ENCODE measurements at regions of chr19 and their contacts with region 1.

Region 1: GRCh38 chr19:3984908-3985642 is at the start of gene EEF2:
- DNase-seq: peak; percentile 92 to 93 (median 92)
- H3K4me3 ChIP-seq: peak within 1 kb of the TSS; percentile 76 to 97 (median 93)
- H3K4me3 Mint-ChIP-seq: peak within 1 kb of the TSS; percentile 96 to 97
- H3K27ac ChIP-seq: peak within 1 kb of the TSS; percentile 83 to 93
- H3K27ac Mint-ChIP-seq: peak within 1 kb of the TSS; percentile 93 to 99 (median 96)
- H3K4me1 ChIP-seq: peaks cover 35 to 44% of the 10 kb centered on the region in 2 donors
- H3K4me1 Mint-ChIP-seq: peaks cover 40% of the 10 kb centered on the region
- H3K27me3 ChIP-seq: no peaks in the 10 kb centered on the region
- H3K27me3 Mint-ChIP-seq: peaks cover 0 to 3% (median 0%) of the 10 kb centered on the region in 3 donors
- CTCF ChIP-seq: no peak
- polyA plus RNA-seq, gene EEF2: 264 to 836 (median 323) TPM

Region 2: GRCh38 chr19:3970808-3971598 is 14.1 kb before region 1 on chr19 and contains the start of gene DAPK3:
- intact Hi-C with region 1: loop called in 1 of 2 experiments (anchors 2 kb)
- DNase-seq: peak; percentile 95 to 96 (median 96)
- H3K4me3 ChIP-seq: peak within 1 kb of the TSS; percentile 85 to 95 (median 94)
- H3K4me3 Mint-ChIP-seq: peak within 1 kb of the TSS; percentile 88 to 93
- H3K27ac ChIP-seq: peak within 1 kb of the TSS; percentile 44 to 76
- H3K27ac Mint-ChIP-seq: peak within 1 kb of the TSS; percentile 72 to 93 (median 81)
- H3K4me1 ChIP-seq: peaks cover 11 to 20% of the 10 kb centered on the region in 2 donors
- H3K4me1 Mint-ChIP-seq: peaks cover 15% of the 10 kb centered on the region
- H3K27me3 ChIP-seq: no peaks in the 10 kb centered on the region
- H3K27me3 Mint-ChIP-seq: peaks cover 0 to 2% (median 2%) of the 10 kb centered on the region in 3 donors
- CTCF ChIP-seq: no peak
- polyA plus RNA-seq, gene DAPK3: 13.7 to 32.1 (median 21.8) TPM

Region 3: DNA sequence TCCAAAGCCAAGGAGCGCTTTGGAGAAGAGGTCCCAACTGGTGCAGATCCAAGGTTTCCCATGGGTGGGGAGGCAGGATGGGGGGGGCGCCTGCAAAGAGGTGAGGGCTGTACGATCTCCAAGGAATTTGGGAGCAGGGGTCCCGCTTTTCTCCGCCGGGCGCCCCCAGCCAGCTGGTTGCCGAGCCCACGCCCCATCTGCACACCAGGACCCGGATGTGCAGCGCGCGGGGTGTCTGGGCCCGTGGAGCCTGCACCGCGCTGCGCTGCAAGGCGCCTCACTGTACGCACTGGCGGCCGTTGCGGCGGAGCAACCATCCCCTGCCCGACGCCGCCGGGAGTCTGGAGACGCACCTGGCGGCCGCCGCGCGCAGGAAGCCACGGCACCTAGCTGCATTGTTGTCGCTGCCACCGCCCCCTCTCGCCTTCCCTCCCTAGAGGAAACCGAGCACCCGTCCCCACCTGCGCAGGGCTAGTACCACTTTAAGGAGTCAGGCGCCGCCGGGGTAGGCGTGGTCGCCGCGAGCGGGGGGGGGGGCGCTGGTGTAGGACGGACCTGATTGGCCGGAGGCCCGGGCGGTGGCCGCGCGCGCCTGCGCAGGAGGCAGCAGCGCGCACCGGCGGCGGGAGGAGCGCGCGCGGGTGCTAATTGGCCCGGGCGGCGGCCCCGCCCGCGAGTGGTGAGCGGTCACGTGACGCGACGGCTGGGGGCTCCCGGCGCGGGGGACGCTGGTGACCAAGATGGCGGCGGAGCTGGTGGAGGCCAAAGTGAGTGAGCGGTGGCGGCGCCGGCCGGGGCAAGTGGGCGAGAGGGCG is 22.2 kb after region 1 on chr19 and contains the start of gene PIAS4:
- intact Hi-C with region 1: loop called in 1 of 2 experiments (anchors 2 kb)
- DNase-seq: peak; percentile 92 to 96 (median 95)
- H3K4me3 ChIP-seq: peak within 1 kb of the TSS; percentile 74 to 84 (median 79)
- H3K4me3 Mint-ChIP-seq: peak within 1 kb of the TSS; percentile 84 to 91
- H3K27ac ChIP-seq: peak within 1 kb of the TSS in 1 of 2 donors; percentile 71
- H3K27ac Mint-ChIP-seq: peak within 1 kb of the TSS; percentile 37 to 85 (median 69)
- H3K4me1 ChIP-seq: peaks cover 19 to 32% of the 10 kb centered on the region in 2 donors
- H3K4me1 Mint-ChIP-seq: peaks cover 30% of the 10 kb centered on the region
- H3K27me3 ChIP-seq: no peaks in the 10 kb centered on the region
- H3K27me3 Mint-ChIP-seq: peaks cover 0 to 1% (median 0%) of the 10 kb centered on the region in 3 donors
- CTCF ChIP-seq: no peak
- polyA plus RNA-seq, gene PIAS4: 2.3 to 8.1 (median 5.9) TPM

Region 4: DNA sequence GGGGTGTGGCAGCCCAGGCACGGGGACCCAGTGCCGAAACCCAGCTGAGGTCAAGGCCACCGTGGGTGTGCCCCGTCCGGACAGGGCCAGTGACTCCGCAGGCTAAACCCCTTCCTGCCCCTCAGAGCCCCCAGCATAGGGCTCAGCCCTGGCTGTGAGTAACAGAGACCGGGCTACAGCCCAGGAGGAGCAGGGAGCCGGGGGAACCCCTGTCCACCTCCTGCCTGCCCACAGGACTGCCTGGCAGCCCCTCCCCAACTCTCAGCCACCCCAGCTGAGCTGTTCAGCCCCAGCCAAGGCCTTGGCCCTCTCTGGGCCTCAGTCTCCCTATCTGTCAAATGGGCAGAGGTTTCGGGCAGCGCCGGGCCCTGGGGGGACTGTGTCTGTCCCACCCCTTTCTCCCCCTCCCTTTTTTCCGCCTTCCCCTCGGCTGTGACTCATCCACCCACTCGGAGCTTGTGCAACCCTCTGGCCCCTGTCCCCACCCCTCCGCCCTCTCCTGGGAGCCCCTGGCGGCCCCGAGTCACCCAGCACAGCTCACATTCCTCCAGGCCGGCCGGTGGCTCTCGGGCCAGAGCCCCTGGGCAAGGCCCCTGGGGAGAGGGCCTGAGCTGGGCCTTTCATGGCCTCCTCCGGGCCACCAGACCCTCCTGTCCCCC is 73.1 kb after region 1 on chr19:
- intact Hi-C with region 1: no loop called
- DNase-seq: peak; percentile 94 to 98 (median 95)
- H3K4me3 ChIP-seq: peak overlapping the region; percentile 13 to 93 (median 40)
- H3K4me3 Mint-ChIP-seq: peak overlapping the region; percentile 77
- H3K27ac ChIP-seq: peak overlapping the region; percentile 97
- H3K27ac Mint-ChIP-seq: peak overlapping the region; percentile 96 to 100 (median 99)
- H3K4me1 ChIP-seq: peaks cover 77 to 92% of the 10 kb centered on the region in 2 donors
- H3K4me1 Mint-ChIP-seq: peaks cover 65% of the 10 kb centered on the region
- H3K27me3 ChIP-seq: no peaks in the 10 kb centered on the region
- H3K27me3 Mint-ChIP-seq: peaks cover 0 to 4% (median 1%) of the 10 kb centered on the region in 3 donors
- CTCF ChIP-seq: peak; percentile 46

Region 5: DNA sequence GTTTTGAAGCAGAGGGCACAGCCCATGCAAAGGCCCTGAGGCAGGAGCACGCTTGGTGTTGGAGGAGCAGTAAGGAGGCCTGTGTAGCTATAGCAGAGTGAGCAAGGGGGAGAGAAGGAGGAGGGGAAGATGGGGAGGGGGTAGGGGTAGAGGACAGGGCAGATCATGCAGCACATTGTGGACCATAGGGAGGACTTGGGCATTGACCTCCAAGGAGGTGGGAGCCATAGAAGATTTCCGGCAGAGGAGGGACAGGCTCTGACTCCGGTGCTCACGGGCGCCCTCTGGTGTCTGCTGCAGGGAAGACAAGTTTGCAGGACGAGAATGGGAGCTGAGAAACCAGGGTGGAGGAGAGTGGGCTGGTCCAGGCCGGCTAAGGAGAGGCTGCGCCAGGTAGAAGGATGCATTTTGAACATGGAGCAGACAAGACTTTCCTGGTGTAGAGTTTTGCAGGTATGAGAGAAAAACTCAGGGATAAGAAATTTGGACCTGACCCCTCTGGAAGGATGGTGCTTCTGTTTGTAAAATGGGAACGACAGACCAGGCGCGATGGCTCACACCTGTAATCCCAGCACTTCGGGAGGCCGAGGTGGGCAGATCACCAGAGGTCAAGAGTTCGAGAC is 154.7 kb after region 1 on chr19:
- intact Hi-C with region 1: loop called in 1 of 2 experiments (anchors 2 kb)
- DNase-seq: peak; percentile 61 to 69 (median 64)
- H3K4me3 ChIP-seq: no peak overlapping the region
- H3K4me3 Mint-ChIP-seq: no peak overlapping the region
- H3K27ac ChIP-seq: no peak overlapping the region
- H3K27ac Mint-ChIP-seq: peak overlapping the region in 2 of 7 donors; percentile 1 to 44
- H3K4me1 ChIP-seq: peaks cover 3 to 7% of the 10 kb centered on the region in 2 donors
- H3K4me1 Mint-ChIP-seq: peaks cover 10% of the 10 kb centered on the region
- H3K27me3 ChIP-seq: no peaks in the 10 kb centered on the region
- H3K27me3 Mint-ChIP-seq: peaks cover 4 to 26% (median 12%) of the 10 kb centered on the region in 3 donors
- CTCF ChIP-seq: peak; percentile 77

Region 6: GRCh38 chr19:4182084-4182810 is 197.2 kb after region 1 on chr19 and contains the starts of genes ANKRD24 and SIRT6:
- intact Hi-C with region 1: loop called in 1 of 2 experiments (anchors 2 kb)
- DNase-seq: peak; percentile 96 to 97 (median 96)
- H3K4me3 ChIP-seq: peak within 1 kb of the TSS; percentile 59 to 94 (median 87)
- H3K4me3 Mint-ChIP-seq: peak within 1 kb of the TSS; percentile 91 to 98
- H3K27ac ChIP-seq: peak within 1 kb of the TSS; percentile 43 to 88
- H3K27ac Mint-ChIP-seq: peak within 1 kb of the TSS; percentile 91 to 96 (median 94)
- H3K4me1 ChIP-seq: peaks cover 28 to 42% of the 10 kb centered on the region in 2 donors
- H3K4me1 Mint-ChIP-seq: peaks cover 36% of the 10 kb centered on the region
- H3K27me3 ChIP-seq: no peaks in the 10 kb centered on the region
- H3K27me3 Mint-ChIP-seq: peaks cover 0 to 4% (median 0%) of the 10 kb centered on the region in 3 donors
- CTCF ChIP-seq: no peak
- polyA plus RNA-seq, gene ANKRD24: 0.07 to 0.79 TPM in 2 of 3 donors, not detected in the other
- polyA plus RNA-seq, gene SIRT6: 0.57 to 50.3 (median 1.2) TPM